GM12878 (cell line): ENCODE measurements at regions of chr12 and their contacts with region 1.

Region 1: GRCh38 chr12:103392722-103393121 is 103.0 kb downstream of the C12orf42 start:
- DNase-seq: peak; percentile 79
- ATAC-seq: peak; percentile 97
- H3K4me3 ChIP-seq: no peak overlapping the region
- H3K27ac ChIP-seq: no peak overlapping the region
- H3K4me1 ChIP-seq: peaks cover 8% of the 10 kb centered on the region
- H3K27me3 ChIP-seq: no peaks in the 10 kb centered on the region
- CTCF ChIP-seq: no peak
- EP300 ChIP-seq: peak; percentile 50 to 89; a peak in 3 of 4 replicates
- POLR2A ChIP-seq: no peak
- RAD21 ChIP-seq: no peak

Region 2: DNA sequence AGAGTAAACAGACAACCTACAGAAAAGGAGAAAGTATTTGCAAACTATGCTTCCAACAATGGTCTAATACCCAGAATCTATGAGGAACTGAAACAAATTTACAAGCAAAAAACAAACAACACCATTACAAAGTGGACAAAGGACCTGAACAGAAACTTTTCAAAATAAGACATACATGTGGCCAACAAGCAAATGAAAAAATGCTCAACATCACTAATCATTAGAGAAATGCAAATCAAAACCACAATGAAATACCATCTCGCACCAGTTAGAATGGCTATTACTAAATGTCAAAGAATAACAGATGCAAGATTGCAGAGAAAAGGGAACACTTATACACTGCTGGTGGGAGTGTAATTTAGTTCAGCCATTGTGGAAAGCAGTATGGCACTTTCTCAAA is 22.8 kb before region 1 on chr12:
- CTCF ChIA-PET with region 1: no interaction called
- POLR2A ChIA-PET with region 1: no interaction called
- RAD21 ChIA-PET with region 1: no interaction called
- SMC1A ChIA-PET with region 1: interaction called, 3 read pairs
- in situ Hi-C with region 1: no loop called
- intact Hi-C with region 1: loop called (anchors 2 kb)
- DNase-seq: peak; percentile 78
- ATAC-seq: peak; percentile 89
- H3K4me3 ChIP-seq: no peak overlapping the region
- H3K27ac ChIP-seq: no peak overlapping the region
- H3K4me1 ChIP-seq: peaks cover 10% of the 10 kb centered on the region
- H3K27me3 ChIP-seq: no peaks in the 10 kb centered on the region
- CTCF ChIP-seq: no peak
- EP300 ChIP-seq: peak; percentile 76 to 86
- POLR2A ChIP-seq: no peak
- RAD21 ChIP-seq: no peak

Region 3: DNA sequence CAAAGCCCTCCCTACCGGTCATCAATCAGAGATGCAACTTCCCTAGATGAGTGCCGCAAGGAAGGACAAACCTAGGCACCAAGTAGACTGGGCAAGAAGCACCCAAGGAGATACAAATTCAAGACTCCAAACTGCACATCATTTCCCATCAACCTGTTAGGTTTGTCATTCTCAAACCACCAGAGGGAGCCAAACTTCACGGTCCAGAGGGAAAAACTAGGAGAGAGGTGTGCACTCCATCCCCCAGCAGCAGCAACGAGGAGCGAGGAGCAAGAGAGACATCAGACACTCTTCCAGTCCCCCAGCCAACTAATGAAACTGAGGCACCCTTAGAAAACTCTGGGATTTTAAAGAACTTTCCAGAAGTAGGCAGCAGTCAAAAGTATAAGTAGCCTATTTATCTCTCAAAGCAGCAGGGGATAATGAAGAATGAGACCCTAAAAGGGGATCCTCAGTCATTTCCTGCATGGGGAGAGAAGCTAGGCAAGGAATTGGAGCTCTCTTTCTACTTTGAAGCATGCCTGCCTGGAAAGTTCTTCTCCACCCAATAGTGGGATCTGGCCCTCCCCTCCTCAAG is 485.3 kb after region 1 on chr12:
- CTCF ChIA-PET with region 1: no interaction called
- POLR2A ChIA-PET with region 1: no interaction called
- RAD21 ChIA-PET with region 1: no interaction called
- SMC1A ChIA-PET with region 1: no interaction called
- in situ Hi-C with region 1: no loop called
- intact Hi-C with region 1: no loop called
- DNase-seq: peak; percentile 49
- ATAC-seq: peak; percentile 66
- H3K4me3 ChIP-seq: no peak overlapping the region
- H3K27ac ChIP-seq: no peak overlapping the region
- H3K4me1 ChIP-seq: peaks cover 31% of the 10 kb centered on the region
- H3K27me3 ChIP-seq: no peaks in the 10 kb centered on the region
- CTCF ChIP-seq: peak; percentile 74 to 79 (median 77)
- EP300 ChIP-seq: no peak
- POLR2A ChIP-seq: no peak
- RAD21 ChIP-seq: peak; percentile 92